ENCODE measurements at regions of chr1 and their contacts with region 1.

Region 1: DNA sequence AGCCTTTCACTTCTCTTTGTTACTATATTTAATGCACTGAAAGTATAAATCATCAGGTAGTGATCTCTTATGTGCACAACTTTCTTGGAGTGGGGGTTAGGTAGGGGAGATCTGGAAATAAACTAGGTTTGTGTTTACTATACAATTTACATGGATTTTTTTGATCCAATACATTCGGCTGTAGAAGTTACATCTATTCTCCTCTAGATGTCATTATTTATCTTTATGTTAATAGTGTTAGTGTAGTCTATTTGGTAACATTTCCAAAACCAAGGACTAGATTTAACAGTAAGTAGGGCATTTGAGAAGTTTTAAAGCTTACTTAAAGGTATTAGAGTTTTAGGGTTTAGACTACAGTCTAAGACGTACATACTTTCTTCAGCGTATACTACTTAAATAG is 5.4 kb downstream of the VPS45 start:
- DNase-seq: peak in 1 of 2 donors; percentile 44
- ATAC-seq: peak; percentile 61 to 74 (median 72)
- H3K4me3 ChIP-seq: no peak overlapping the region
- H3K4me3 Mint-ChIP-seq: no peak overlapping the region
- H3K27ac ChIP-seq: no peak overlapping the region
- H3K27ac Mint-ChIP-seq: no peak overlapping the region
- H3K4me1 ChIP-seq: peaks cover 1% of the 10 kb centered on the region
- H3K4me1 Mint-ChIP-seq: peaks cover 13 to 21% of the 10 kb centered on the region in 2 donors
- H3K27me3 ChIP-seq: no peaks in the 10 kb centered on the region
- H3K27me3 Mint-ChIP-seq: no peaks in the 10 kb centered on the region
- CTCF ChIP-seq: peak; percentile 59

Region 2: GRCh38 chr1:149978547-149979023 is 94.4 kb before region 1 on chr1:
- intact Hi-C with region 1: no loop called
- DNase-seq: no peak
- ATAC-seq: no peak
- H3K4me3 ChIP-seq: no peak overlapping the region
- H3K4me3 Mint-ChIP-seq: no peak overlapping the region
- H3K27ac ChIP-seq: no peak overlapping the region
- H3K27ac Mint-ChIP-seq: no peak overlapping the region
- H3K4me1 ChIP-seq: no peaks in the 10 kb centered on the region
- H3K4me1 Mint-ChIP-seq: peaks cover 22 to 24% of the 10 kb centered on the region in 2 donors
- H3K27me3 ChIP-seq: no peaks in the 10 kb centered on the region
- H3K27me3 Mint-ChIP-seq: no peaks in the 10 kb centered on the region
- CTCF ChIP-seq: no peak

Region 3: DNA sequence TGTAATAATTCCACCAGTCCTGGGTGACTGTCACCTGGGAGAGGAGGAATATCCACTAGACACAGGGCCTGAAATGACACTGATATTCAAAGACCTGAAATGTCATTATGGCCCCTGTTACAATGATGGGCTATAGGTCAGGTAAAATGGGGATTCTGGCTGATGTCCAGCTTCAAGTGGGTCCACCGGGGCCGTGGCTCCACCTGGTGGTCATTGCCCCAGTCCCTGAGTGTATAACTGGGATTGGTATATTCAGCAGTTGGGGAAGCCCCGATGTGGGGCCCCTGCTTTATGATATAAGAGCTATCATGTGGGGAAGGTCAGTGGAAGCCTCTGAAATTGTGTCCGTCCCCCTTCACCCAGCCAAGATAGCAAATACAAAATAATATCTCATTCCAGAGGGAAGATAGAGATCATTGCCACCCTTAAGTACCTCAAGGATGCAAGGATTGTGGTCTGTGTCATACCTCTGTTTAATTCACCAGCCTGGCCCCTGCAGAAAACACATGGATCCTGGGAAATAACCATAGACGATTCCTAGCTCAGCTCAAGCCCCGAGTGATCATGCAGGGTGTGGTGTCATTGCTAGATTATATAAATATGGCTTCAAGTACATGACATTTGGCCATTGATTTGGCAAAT is 96.1 kb after region 1 on chr1:
- intact Hi-C with region 1: loop called (anchors 1 kb)
- DNase-seq: peak; percentile 61 to 71
- ATAC-seq: peak; percentile 68 to 84 (median 77)
- H3K4me3 ChIP-seq: no peak overlapping the region
- H3K4me3 Mint-ChIP-seq: no peak overlapping the region
- H3K27ac ChIP-seq: no peak overlapping the region
- H3K27ac Mint-ChIP-seq: no peak overlapping the region
- H3K4me1 ChIP-seq: peaks cover 14% of the 10 kb centered on the region
- H3K4me1 Mint-ChIP-seq: no peaks in the 10 kb centered on the region
- H3K27me3 ChIP-seq: no peaks in the 10 kb centered on the region
- H3K27me3 Mint-ChIP-seq: peaks cover 0 to 2% of the 10 kb centered on the region in 2 donors
- CTCF ChIP-seq: peak; percentile 55

Measured in natural killer cell (primary cell).